Activated CD4-positive, alpha-beta T cell treated with anti-CD3 and anti-CD28 coated beads, Interleukin-2, amount 10 ng/mL, durations not matched to agents 24 days and 14 days (primary cell): ENCODE measurements at regions of chr1 and their contacts with region 1.

Region 1: DNA sequence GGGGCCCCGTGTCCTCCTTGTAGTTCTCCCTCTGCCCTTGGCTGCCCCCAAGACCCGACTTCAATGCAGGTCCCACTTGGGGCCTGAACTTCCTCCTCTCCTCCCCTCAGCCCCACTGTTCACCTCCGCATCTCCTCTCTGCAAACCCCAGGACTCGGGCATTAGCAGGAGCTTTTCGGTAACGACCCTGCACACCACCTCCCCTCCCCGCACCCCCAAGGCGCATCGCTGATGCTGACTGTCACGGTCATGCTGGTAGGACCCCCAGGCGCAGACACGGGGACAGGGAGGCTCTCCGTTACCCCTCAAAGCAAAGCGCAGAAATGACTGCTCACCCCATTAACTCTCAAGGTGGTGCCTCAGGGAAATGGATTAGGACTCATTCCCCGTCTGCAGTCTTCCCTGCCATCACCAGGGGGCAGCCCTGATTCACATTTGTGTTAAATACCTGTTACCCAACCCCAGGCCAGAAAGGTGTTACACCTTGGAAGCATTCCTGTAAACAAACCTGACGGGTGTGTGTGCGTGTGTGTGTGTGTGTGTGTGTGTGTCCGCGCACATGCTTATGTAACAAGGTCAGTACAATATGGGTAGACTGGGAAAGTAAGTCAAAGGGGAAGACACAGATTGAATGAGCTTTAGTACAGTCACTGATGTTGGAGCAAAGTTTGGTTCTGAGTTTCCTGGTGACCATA is 6.4 kb upstream of the GUCA2B start:
- DNase-seq: peak; percentile 91
- H3K4me3 Mint-ChIP-seq: no peak overlapping the region
- H3K27ac Mint-ChIP-seq: no peak overlapping the region
- H3K4me1 Mint-ChIP-seq: peaks cover 5% of the 10 kb centered on the region
- H3K27me3 Mint-ChIP-seq: peaks cover 4% of the 10 kb centered on the region

Region 2: GRCh38 chr1:41939194-41939593 is 207.6 kb before region 1 on chr1:
- intact Hi-C with region 1: no loop called
- DNase-seq: no peak
- H3K4me3 Mint-ChIP-seq: no peak overlapping the region
- H3K27ac Mint-ChIP-seq: no peak overlapping the region
- H3K4me1 Mint-ChIP-seq: peaks cover 9% of the 10 kb centered on the region
- H3K27me3 Mint-ChIP-seq: no peaks in the 10 kb centered on the region

Region 3: DNA sequence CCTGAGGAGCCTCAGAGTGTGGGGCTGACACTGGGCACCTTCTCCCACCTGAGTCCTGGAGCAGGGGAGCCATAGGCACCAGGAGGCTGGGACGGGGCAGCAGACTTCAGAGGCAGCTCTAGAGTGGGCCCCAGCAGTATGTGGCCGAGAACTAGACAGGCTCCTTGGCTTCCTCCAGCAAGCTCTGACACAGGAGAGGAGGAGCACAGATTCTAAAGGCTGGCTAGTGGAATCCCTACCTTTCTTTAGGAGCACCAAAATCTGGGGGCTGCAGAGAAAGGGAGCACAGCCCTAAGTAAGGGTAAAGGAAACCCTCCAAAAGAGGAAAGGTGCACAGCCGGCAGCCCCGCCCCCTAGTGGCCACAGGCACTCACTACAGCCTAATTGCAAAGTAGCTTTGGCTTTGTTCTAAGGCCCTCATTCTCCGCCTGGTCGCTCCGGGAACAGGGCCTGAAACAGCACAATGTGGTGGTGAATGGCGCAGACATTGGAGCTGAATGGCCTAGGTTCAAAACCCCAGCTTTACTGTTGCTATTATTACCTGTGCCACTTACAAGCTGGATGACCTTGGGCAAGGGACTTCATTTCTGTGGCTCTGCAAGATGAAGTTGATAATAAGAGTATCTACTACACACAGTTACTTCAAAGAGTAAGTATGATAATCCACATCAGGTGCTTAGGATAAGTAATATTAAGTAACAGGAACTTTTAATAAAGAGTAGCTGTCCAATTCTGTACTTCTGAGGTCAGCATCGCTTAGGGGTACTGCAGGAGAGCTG is 26.6 kb after region 1 on chr1:
- intact Hi-C with region 1: loop called (anchors 1 kb)
- DNase-seq: peak; percentile 89
- H3K4me3 Mint-ChIP-seq: no peak overlapping the region
- H3K27ac Mint-ChIP-seq: no peak overlapping the region
- H3K4me1 Mint-ChIP-seq: no peaks in the 10 kb centered on the region
- H3K27me3 Mint-ChIP-seq: no peaks in the 10 kb centered on the region